ENCODE measurements at regions of chr4 and their contacts with region 1.

Region 1: DNA sequence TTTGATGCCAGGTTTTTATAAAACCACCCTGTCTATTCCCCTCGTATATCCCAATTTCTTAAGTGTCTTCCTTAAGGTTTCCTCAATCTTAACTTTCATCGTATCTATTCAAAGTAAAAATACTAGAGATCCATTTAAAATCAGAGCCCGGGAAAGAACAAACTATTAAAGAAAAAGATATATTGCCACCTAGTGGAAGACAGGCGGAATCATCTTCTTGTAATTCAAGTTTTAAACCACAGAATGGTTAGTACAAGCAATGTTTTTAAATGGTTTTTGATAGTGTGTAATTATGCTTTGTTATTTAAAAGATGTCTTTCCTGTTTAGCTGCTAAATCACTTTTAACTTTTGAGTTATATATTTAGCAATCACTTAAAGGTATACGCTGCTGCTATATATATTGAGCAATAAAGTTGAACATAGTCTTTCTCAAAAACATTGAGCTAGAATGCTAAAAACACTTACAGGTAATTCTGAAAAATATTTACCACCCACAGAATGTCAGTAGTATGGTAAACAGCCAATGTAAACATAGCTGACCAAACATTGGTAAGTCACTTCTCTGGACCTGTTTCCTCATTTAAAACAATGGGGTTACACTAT is 18.2 kb downstream of the PRDM8 start:
- DNase-seq: no peak
- H3K4me3 Mint-ChIP-seq: no peak overlapping the region
- H3K27ac Mint-ChIP-seq: no peak overlapping the region
- H3K4me1 Mint-ChIP-seq: peaks cover 2% of the 10 kb centered on the region
- H3K27me3 Mint-ChIP-seq: peaks cover 10% of the 10 kb centered on the region

Region 2: DNA sequence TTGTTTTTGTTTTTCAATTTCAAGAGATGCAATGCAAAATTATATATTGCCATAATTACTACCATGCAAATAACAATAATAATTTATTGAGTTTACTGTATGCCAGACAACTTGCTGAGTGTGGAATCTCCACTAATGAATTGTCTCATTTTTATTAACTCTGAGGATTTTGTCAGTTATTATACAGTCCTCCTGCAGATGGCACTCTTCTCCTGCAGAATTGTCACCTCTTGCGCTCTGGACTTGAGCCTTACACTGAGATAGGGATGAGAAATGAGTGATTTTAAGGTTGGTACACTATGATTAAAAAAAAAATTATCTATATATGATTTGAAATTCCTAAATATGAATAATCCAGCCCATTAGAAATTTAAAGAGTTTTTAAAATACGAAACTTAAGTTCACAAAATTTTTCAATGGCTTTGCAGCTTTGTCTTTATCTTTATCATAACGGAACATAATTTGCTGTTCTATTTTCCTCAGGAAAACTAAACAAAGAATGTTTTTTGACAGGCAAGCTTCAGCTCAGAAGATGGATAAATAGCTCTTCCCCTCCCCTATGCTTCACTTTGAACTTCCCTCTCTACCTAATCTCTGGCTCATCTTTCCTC is 1263.6 kb before region 1 on chr4:
- CTCF ChIA-PET with region 1: interaction called, 14 read pairs
- POLR2A ChIA-PET with region 1: no interaction called
- intact Hi-C with region 1: loop called (anchors 1 kb)
- DNase-seq: peak; percentile 38
- H3K4me3 Mint-ChIP-seq: no peak overlapping the region
- H3K27ac Mint-ChIP-seq: no peak overlapping the region
- H3K4me1 Mint-ChIP-seq: peaks cover 2% of the 10 kb centered on the region
- H3K27me3 Mint-ChIP-seq: peaks cover 21% of the 10 kb centered on the region

Region 3: GRCh38 chr4:79042079-79042674 is 1173.4 kb before region 1 on chr4:
- CTCF ChIA-PET with region 1: no interaction called
- POLR2A ChIA-PET with region 1: no interaction called
- intact Hi-C with region 1: loop called (anchors 10 kb)
- DNase-seq: no peak
- H3K4me3 Mint-ChIP-seq: no peak overlapping the region
- H3K27ac Mint-ChIP-seq: no peak overlapping the region
- H3K4me1 Mint-ChIP-seq: no peaks in the 10 kb centered on the region
- H3K27me3 Mint-ChIP-seq: no peaks in the 10 kb centered on the region

Region 4: GRCh38 chr4:79917246-79917645 is 298.3 kb before region 1 on chr4:
- CTCF ChIA-PET with region 1: interaction called, 12 read pairs
- POLR2A ChIA-PET with region 1: no interaction called
- intact Hi-C with region 1: loop called (anchors 1 kb)
- DNase-seq: peak; percentile 65
- H3K4me3 Mint-ChIP-seq: no peak overlapping the region
- H3K27ac Mint-ChIP-seq: no peak overlapping the region
- H3K4me1 Mint-ChIP-seq: peaks cover 20% of the 10 kb centered on the region
- H3K27me3 Mint-ChIP-seq: no peaks in the 10 kb centered on the region

Region 5: GRCh38 chr4:80202190-80202711 is 13.3 kb before region 1 on chr4:
- CTCF ChIA-PET with region 1: interaction called, 16 read pairs
- POLR2A ChIA-PET with region 1: interaction called, 7 read pairs
- intact Hi-C with region 1: loop called (anchors 1 kb)
- DNase-seq: peak; percentile 86
- H3K4me3 Mint-ChIP-seq: peak overlapping the region; percentile 73
- H3K27ac Mint-ChIP-seq: peak overlapping the region; percentile 78
- H3K4me1 Mint-ChIP-seq: peaks cover 22% of the 10 kb centered on the region
- H3K27me3 Mint-ChIP-seq: peaks cover 6% of the 10 kb centered on the region

Measured in activated CD4-positive, alpha-beta memory T cell treated with anti-CD3 and anti-CD28 coated beads for 36 hours (primary cell).